B cell (primary cell): ENCODE measurements at regions of chr5 and their contacts with region 1.

Region 1: GRCh38 chr5:58886315-58887207 is 303.7 kb downstream of the RAB3C start:
- DNase-seq: peak; percentile 70
- ATAC-seq: peak; percentile 89
- H3K4me3 ChIP-seq: no peak overlapping the region
- H3K4me3 Mint-ChIP-seq: no peak overlapping the region
- H3K27ac ChIP-seq: no peak overlapping the region
- H3K27ac Mint-ChIP-seq: no peak overlapping the region
- H3K4me1 ChIP-seq: peaks cover 0 to 3% of the 10 kb centered on the region in 2 donors
- H3K4me1 Mint-ChIP-seq: peaks cover 5% of the 10 kb centered on the region
- H3K27me3 ChIP-seq: peaks cover 0 to 7% (median 5%) of the 10 kb centered on the region in 4 experiments
- H3K27me3 Mint-ChIP-seq: peaks cover 14% of the 10 kb centered on the region
- CTCF ChIP-seq: peak; percentile 89

Region 2: GRCh38 chr5:58871648-58872242 is 14.8 kb before region 1 on chr5:
- CTCF ChIA-PET with region 1: interaction called, 39 read pairs
- POLR2A ChIA-PET with region 1: no interaction called
- intact Hi-C with region 1: no loop called
- DNase-seq: peak; percentile 42
- ATAC-seq: no peak
- H3K4me3 ChIP-seq: no peak overlapping the region
- H3K4me3 Mint-ChIP-seq: no peak overlapping the region
- H3K27ac ChIP-seq: no peak overlapping the region
- H3K27ac Mint-ChIP-seq: no peak overlapping the region
- H3K4me1 ChIP-seq: no peaks in the 10 kb centered on the region
- H3K4me1 Mint-ChIP-seq: no peaks in the 10 kb centered on the region
- H3K27me3 ChIP-seq: no peaks in the 10 kb centered on the region
- H3K27me3 Mint-ChIP-seq: peaks cover 7% of the 10 kb centered on the region
- CTCF ChIP-seq: peak; percentile 87

Region 3: DNA sequence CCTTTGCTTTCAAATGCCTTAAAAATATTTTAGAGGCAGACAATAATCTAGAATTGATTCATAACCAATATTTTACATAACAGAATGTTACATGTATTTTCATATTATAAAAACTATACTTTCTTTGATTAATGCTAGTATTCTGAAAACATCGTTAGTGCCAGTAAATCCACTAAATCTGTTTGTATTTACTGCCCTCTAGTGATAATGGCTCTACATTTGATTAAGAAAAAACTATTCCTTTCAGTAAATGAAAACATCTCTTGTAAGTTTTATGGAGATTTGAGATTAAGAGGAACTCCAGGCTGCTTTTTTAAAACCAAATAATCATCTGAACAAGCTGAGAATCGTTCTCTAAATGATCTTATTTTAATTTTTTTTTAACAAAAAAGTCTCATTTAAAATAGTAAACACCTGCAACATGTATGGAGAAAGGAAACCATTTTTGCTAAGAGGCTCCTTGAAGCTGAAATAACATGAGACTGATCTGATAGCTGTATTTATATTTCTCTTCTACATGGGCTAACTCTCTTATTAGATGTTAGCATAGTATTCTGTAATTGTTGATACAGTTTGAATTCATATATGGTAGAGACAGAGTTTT is 121.0 kb after region 1 on chr5:
- CTCF ChIA-PET with region 1: interaction called, 6 read pairs
- POLR2A ChIA-PET with region 1: interaction called, 3 read pairs
- intact Hi-C with region 1: loop called (anchors 2 kb)
- DNase-seq: no peak
- ATAC-seq: no peak
- H3K4me3 ChIP-seq: no peak overlapping the region
- H3K4me3 Mint-ChIP-seq: no peak overlapping the region
- H3K27ac ChIP-seq: no peak overlapping the region
- H3K27ac Mint-ChIP-seq: no peak overlapping the region
- H3K4me1 ChIP-seq: no peaks in the 10 kb centered on the region
- H3K4me1 Mint-ChIP-seq: no peaks in the 10 kb centered on the region
- H3K27me3 ChIP-seq: no peaks in the 10 kb centered on the region
- H3K27me3 Mint-ChIP-seq: no peaks in the 10 kb centered on the region
- CTCF ChIP-seq: peak; percentile 34

Region 4: GRCh38 chr5:59180515-59180914 is 294.0 kb after region 1 on chr5:
- CTCF ChIA-PET with region 1: interaction called, 116 read pairs
- POLR2A ChIA-PET with region 1: no interaction called
- intact Hi-C with region 1: no loop called
- DNase-seq: no peak
- ATAC-seq: no peak
- H3K4me3 ChIP-seq: no peak overlapping the region
- H3K4me3 Mint-ChIP-seq: no peak overlapping the region
- H3K27ac ChIP-seq: no peak overlapping the region
- H3K27ac Mint-ChIP-seq: no peak overlapping the region
- H3K4me1 ChIP-seq: peaks cover 0 to 5% of the 10 kb centered on the region in 2 donors
- H3K4me1 Mint-ChIP-seq: peaks cover 6% of the 10 kb centered on the region
- H3K27me3 ChIP-seq: no peaks in the 10 kb centered on the region
- H3K27me3 Mint-ChIP-seq: no peaks in the 10 kb centered on the region
- CTCF ChIP-seq: no peak

Region 5: GRCh38 chr5:59380350-59380951 is 493.9 kb after region 1 on chr5:
- CTCF ChIA-PET with region 1: interaction called, 36 read pairs
- POLR2A ChIA-PET with region 1: no interaction called
- intact Hi-C with region 1: loop called (anchors 1 kb)
- DNase-seq: peak; percentile 64
- ATAC-seq: peak; percentile 85
- H3K4me3 ChIP-seq: no peak overlapping the region
- H3K4me3 Mint-ChIP-seq: no peak overlapping the region
- H3K27ac ChIP-seq: no peak overlapping the region
- H3K27ac Mint-ChIP-seq: no peak overlapping the region
- H3K4me1 ChIP-seq: no peaks in the 10 kb centered on the region
- H3K4me1 Mint-ChIP-seq: peaks cover 5% of the 10 kb centered on the region
- H3K27me3 ChIP-seq: no peaks in the 10 kb centered on the region
- H3K27me3 Mint-ChIP-seq: no peaks in the 10 kb centered on the region
- CTCF ChIP-seq: peak; percentile 72